GM12878 (cell line): ENCODE measurements at regions of chrX and their contacts with region 1.

Region 1: DNA sequence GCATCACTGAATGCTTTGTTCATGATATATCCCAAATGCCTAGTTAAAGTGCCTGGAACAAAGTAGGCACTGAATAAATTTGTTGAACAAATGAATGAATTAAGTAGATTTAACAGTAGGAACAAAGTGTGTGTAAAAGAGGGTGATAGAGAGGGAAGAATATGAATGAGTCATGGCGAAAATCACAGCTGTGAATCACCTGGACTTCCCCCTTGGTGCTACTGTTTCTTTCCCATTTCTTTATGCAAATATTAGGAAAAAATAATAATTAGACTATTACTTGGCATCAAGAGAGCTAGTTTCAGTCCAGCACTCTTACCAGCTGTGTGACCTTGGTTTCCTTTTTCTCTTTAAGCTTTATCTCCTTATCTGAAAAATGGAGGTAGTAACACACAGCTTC is 9.2 kb downstream of the SPIN3 start:
- DNase-seq: no peak
- ATAC-seq: peak; percentile 67
- H3K4me3 ChIP-seq: no peak overlapping the region
- H3K27ac ChIP-seq: no peak overlapping the region
- H3K4me1 ChIP-seq: no peaks in the 10 kb centered on the region
- H3K27me3 ChIP-seq: no peaks in the 10 kb centered on the region
- CTCF ChIP-seq: no peak
- EP300 ChIP-seq: peak in 1 of 2 experiments; percentile 55; a peak in 1 of 4 replicates
- POLR2A ChIP-seq: no peak
- RAD21 ChIP-seq: no peak

Region 2: GRCh38 chrX:56826020-56826419 is 160.1 kb before region 1 on chrX:
- CTCF ChIA-PET with region 1: no interaction called
- POLR2A ChIA-PET with region 1: no interaction called
- RAD21 ChIA-PET with region 1: no interaction called
- SMC1A ChIA-PET with region 1: no interaction called
- in situ Hi-C with region 1: no loop called
- intact Hi-C with region 1: no loop called
- DNase-seq: no peak
- ATAC-seq: peak; percentile 63
- H3K4me3 ChIP-seq: no peak overlapping the region
- H3K27ac ChIP-seq: no peak overlapping the region
- H3K4me1 ChIP-seq: no peaks in the 10 kb centered on the region
- H3K27me3 ChIP-seq: no peaks in the 10 kb centered on the region
- CTCF ChIP-seq: no peak
- EP300 ChIP-seq: no peak
- POLR2A ChIP-seq: no peak
- RAD21 ChIP-seq: no peak

Region 3: GRCh38 chrX:57119416-57119815 is 133.3 kb after region 1 on chrX:
- CTCF ChIA-PET with region 1: no interaction called
- POLR2A ChIA-PET with region 1: no interaction called
- RAD21 ChIA-PET with region 1: no interaction called
- SMC1A ChIA-PET with region 1: no interaction called
- in situ Hi-C with region 1: no loop called
- intact Hi-C with region 1: no loop called
- DNase-seq: no peak
- ATAC-seq: no peak
- H3K4me3 ChIP-seq: no peak overlapping the region
- H3K27ac ChIP-seq: no peak overlapping the region
- H3K4me1 ChIP-seq: no peaks in the 10 kb centered on the region
- H3K27me3 ChIP-seq: no peaks in the 10 kb centered on the region
- CTCF ChIP-seq: no peak
- EP300 ChIP-seq: no peak
- POLR2A ChIP-seq: no peak
- RAD21 ChIP-seq: no peak

Region 4: DNA sequence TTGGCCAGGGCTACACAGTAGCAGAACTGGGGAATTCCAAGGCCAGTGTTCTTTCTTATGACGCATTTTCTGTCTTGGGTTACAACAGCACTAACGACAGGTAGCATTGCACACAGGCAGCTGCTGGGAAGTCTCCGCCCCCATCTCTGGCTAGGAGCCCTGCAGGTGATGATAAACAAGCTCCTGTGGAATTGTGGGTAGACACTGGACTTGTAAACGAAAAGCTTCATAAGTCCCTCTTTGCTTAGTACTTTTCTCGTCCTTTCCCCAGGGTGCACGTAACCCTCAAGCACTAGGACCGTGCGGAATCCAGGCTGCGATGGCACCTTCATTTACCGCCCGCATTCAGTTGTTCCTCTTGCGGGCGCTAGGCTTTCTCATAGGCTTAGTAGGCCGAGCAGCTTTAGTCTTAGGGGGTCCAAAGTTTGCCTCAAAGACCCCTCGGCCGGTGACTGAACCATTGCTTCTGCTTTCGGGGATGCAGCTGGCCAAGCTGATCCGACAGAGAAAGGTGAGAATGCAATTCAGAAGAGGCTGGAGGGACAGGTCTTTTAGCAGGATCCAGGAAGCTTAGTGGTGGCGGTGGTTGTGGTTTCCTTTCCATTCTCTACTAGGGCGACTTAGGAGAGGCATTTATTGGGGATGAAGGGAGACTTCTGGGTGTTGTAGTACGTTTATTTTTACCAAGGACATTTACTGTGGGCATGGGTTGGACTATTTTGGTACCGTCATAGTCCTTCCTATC is 300.5 kb after region 1 on chrX and contains the start of gene FAAH2:
- CTCF ChIA-PET with region 1: no interaction called
- POLR2A ChIA-PET with region 1: no interaction called
- RAD21 ChIA-PET with region 1: no interaction called
- SMC1A ChIA-PET with region 1: interaction called, 6 read pairs
- in situ Hi-C with region 1: loop called (anchors 10 kb)
- intact Hi-C with region 1: loop called (anchors 5 kb)
- DNase-seq: peak; percentile 23
- ATAC-seq: peak; percentile 94
- H3K4me3 ChIP-seq: peak within 1 kb of the TSS; percentile 47
- H3K27ac ChIP-seq: peak within 1 kb of the TSS; percentile 15
- H3K4me1 ChIP-seq: no peaks in the 10 kb centered on the region
- H3K27me3 ChIP-seq: no peaks in the 10 kb centered on the region
- CTCF ChIP-seq: 0 out of 6 replicates have a peak, but pooled peaks of 1 of the 3 experiments have one; percentile 5
- EP300 ChIP-seq: peak in 1 of 2 experiments; percentile 30; a peak in 1 of 4 replicates
- POLR2A ChIP-seq: no peak
- RAD21 ChIP-seq: no peak
- polyA plus RNA-seq, gene FAAH2: 1.5 to 2.4 TPM